Posterior cingulate gyrus (tissue), 11 donors: ENCODE measurements at regions of chr7 and their contacts with region 1.

Region 1: GRCh38 chr7:108459931-108460551 is 3.8 kb upstream of the NRCAM start:
- DNase-seq: peak in 2 of 10 donors; percentile 8 to 18

Region 2: DNA sequence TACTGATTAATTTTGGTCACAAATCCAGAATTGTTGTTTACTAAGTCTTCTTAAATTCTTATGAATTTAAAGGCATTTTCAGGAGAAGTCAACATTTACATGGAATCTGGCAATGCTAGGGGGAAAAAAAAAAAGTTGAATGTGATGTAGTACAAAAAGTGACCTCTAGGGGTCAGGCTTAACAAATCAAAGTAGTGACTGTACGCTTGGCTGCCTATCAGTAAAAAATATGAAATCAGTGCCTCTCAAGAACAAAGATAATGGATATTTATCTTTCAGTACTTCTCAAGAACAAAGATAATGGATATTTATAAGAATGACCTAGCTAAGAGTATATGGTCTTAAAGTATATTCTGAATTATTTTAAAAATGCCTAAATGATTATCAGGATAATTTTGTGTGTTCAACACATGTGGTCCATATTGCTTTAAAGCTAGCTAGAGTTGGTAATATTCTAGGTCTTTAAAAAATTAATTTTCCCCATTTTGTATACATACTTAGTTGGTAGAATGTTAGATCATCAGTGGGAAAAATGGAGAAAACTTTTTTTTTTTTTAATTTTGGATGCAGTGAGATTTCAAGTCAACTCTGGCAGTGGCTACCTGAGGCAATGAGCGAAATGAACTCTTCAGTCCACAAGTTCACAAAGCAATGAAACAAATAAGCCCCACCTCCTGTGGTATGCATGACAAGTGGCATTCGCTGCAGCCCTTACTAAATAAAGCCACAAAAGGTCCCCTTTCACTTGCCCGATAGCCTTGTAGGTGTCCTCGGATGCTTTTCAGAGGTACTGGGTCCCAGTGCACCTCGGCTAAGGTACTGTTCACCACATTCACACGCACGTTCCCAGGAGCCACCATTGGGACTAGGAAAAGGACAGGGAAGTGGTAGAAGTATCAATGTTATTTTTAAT is 278.7 kb before region 1 on chr7:
- intact Hi-C with region 1: loop called (anchors 1 kb)
- DNase-seq: no peak

Region 3: GRCh38 chr7:108402865-108403264 is 57.2 kb before region 1 on chr7:
- intact Hi-C with region 1: loop called (anchors 10 kb)
- DNase-seq: no peak

Region 4: GRCh38 chr7:108650467-108650866 is 190.4 kb after region 1 on chr7:
- intact Hi-C with region 1: no loop called
- DNase-seq: no peak